Activated CD4-positive, alpha-beta T cell treated with anti-CD3 and anti-CD28 coated beads, Interleukin-2, amount 10 ng/mL, durations not matched to agents 24 days and 14 days (primary cell): ENCODE measurements at regions of chr1 and their contacts with region 1.

Region 1: DNA sequence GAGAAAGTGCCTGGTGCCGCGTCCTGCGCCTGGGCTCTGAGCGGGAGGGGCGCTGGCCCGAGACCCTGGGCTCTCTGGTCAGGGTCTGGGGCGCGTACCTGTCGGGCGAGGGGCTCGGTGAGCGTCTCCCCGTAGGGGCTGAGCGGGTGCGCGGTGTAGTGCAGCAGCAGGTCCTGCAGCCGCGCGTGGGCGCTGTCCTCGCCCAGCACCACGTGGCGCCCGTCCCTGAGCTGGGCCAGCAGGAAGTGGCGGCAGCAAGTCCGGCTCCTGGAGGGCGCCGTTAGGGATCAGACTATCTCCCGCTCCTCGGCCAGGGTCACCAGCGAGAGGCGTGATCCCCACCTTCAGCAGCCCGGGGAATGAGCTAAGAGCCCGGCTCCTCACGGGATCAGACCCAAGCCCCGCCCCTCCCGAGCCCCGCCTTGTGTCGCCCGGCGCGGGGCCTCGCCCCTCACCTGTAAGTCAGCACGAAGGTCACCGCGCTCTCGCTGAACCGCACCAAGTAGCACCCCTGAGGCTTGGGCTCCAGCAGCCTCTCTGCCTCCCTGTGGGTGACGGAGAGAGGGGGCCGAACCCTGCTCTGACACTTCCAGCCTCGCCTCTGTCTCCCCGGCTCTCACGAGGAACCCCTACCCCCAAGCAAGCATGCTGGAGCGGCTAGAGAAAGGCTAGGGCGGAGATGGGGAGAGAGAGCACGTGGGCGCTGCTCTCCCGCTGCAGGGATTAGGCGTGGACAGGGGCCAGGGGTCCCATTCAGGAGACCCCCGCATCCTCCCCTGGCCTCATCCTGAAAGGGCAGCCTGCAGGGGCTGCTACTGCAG is 2.7 kb downstream of the SH2D2A start:
- DNase-seq: peak; percentile 92
- H3K4me3 Mint-ChIP-seq: peak overlapping the region; percentile 96
- H3K27ac Mint-ChIP-seq: peak overlapping the region; percentile 100
- H3K4me1 Mint-ChIP-seq: peaks cover 65% of the 10 kb centered on the region
- H3K27me3 Mint-ChIP-seq: no peaks in the 10 kb centered on the region

Region 2: GRCh38 chr1:156456622-156457465 is 357.1 kb before region 1 on chr1:
- intact Hi-C with region 1: no loop called
- DNase-seq: peak; percentile 98
- H3K4me3 Mint-ChIP-seq: peak overlapping the region; percentile 92
- H3K27ac Mint-ChIP-seq: peak overlapping the region; percentile 98
- H3K4me1 Mint-ChIP-seq: peaks cover 16% of the 10 kb centered on the region
- H3K27me3 Mint-ChIP-seq: peaks cover 14% of the 10 kb centered on the region

Region 3: GRCh38 chr1:156571949-156572662 is 241.9 kb before region 1 on chr1 and contains the start of gene IQGAP3:
- intact Hi-C with region 1: no loop called
- DNase-seq: peak; percentile 94
- H3K4me3 Mint-ChIP-seq: peak within 1 kb of the TSS; percentile 92
- H3K27ac Mint-ChIP-seq: peak within 1 kb of the TSS; percentile 77
- H3K4me1 Mint-ChIP-seq: peaks cover 22% of the 10 kb centered on the region
- H3K27me3 Mint-ChIP-seq: peaks cover 22% of the 10 kb centered on the region
- total RNA-seq, gene IQGAP3: 10.5 and 11.2 TPM in 2 replicates

Region 4: DNA sequence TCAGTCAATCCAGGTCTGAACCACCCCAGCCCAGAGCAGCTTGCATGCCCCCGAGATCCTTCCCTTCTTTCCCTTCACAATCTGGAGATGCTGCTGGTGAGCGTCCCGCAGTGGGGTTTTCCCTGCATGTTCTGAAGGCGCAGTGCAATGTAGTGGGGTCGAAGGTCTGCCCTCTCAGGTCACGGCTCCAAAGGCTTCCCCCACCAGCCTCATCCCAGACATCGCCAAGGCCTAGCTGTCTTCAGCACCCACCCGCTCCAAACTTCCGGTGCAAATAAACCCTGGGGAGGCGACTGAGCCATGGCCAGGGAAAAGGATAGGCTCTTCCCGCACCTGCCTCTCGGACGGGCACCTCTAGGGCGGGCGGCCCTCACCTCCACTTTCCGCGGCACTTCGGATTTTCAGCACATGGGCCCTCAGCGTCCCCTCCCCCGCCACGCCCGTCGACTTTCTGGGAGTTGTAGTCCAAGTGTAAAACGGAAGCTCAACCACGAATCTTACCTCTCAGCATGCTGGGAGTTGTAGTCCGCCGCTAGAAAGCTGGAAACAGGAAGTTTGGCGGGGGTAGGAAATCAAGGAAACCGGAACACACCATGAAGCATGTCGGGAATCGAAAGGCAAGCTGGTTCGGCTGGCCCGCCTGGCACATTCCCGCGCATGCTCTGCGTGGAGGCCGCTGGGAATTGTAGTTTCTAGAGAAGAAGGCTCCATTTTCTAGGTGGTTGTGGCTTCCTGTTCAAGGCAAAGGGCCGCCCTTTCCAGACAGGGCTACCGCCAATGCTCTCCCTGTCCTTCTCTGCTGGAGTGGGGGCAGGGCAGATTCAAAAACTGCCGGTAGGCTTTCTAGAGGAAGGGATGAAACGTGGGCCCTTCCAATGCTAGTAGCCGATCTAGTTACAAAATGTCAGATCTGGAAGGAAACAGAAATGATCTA is 73.0 kb before region 1 on chr1 and contains the start of gene MRPL24:
- intact Hi-C with region 1: loop called (anchors 5 kb)
- DNase-seq: peak; percentile 99
- H3K4me3 Mint-ChIP-seq: peak within 1 kb of the TSS; percentile 98
- H3K27ac Mint-ChIP-seq: peak within 1 kb of the TSS; percentile 96
- H3K4me1 Mint-ChIP-seq: peaks cover 25% of the 10 kb centered on the region
- H3K27me3 Mint-ChIP-seq: no peaks in the 10 kb centered on the region
- total RNA-seq, gene MRPL24: 134 and 135 TPM in 2 replicates

Region 5: GRCh38 chr1:156767101-156767878 is 46.7 kb before region 1 on chr1 and contains the start of gene PRCC:
- intact Hi-C with region 1: loop called (anchors 2 kb)
- DNase-seq: peak; percentile 99
- H3K4me3 Mint-ChIP-seq: no peak within 1 kb of the TSS
- H3K27ac Mint-ChIP-seq: peak within 1 kb of the TSS; percentile 79
- H3K4me1 Mint-ChIP-seq: peaks cover 33% of the 10 kb centered on the region
- H3K27me3 Mint-ChIP-seq: no peaks in the 10 kb centered on the region
- total RNA-seq, gene PRCC: 106 and 120 TPM in 2 replicates

Region 6: GRCh38 chr1:156797212-156797871 is 16.6 kb before region 1 on chr1:
- intact Hi-C with region 1: loop called (anchors 2 kb)
- DNase-seq: peak; percentile 90
- H3K4me3 Mint-ChIP-seq: no peak overlapping the region
- H3K27ac Mint-ChIP-seq: no peak overlapping the region
- H3K4me1 Mint-ChIP-seq: peaks cover 17% of the 10 kb centered on the region
- H3K27me3 Mint-ChIP-seq: no peaks in the 10 kb centered on the region

Region 7: DNA sequence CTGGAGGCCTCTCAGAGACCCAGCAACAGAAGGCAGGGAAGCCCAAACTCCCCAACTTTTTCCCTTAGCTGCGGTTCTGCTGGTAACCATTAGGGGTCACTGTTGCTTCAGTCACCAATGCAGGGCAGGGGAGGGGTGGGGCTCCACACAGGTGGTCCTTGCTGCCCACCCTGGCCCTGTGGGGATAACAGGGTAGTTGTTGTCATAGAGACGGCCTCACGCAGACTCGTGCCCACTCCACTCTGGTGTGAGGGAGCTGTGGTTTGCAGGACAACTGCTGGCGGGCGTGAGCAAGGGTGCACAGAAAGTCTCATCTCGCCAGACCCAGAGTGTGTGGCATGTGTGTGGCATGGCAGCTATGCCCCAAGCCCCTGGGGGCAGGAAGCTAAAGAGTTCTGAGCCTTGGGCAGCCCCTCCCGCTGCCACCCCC is 25.0 kb after region 1 on chr1:
- intact Hi-C with region 1: loop called (anchors 1 kb)
- DNase-seq: peak; percentile 87
- H3K4me3 Mint-ChIP-seq: peak overlapping the region; percentile 58
- H3K27ac Mint-ChIP-seq: peak overlapping the region; percentile 46
- H3K4me1 Mint-ChIP-seq: peaks cover 51% of the 10 kb centered on the region
- H3K27me3 Mint-ChIP-seq: peaks cover 19% of the 10 kb centered on the region

Region 8: DNA sequence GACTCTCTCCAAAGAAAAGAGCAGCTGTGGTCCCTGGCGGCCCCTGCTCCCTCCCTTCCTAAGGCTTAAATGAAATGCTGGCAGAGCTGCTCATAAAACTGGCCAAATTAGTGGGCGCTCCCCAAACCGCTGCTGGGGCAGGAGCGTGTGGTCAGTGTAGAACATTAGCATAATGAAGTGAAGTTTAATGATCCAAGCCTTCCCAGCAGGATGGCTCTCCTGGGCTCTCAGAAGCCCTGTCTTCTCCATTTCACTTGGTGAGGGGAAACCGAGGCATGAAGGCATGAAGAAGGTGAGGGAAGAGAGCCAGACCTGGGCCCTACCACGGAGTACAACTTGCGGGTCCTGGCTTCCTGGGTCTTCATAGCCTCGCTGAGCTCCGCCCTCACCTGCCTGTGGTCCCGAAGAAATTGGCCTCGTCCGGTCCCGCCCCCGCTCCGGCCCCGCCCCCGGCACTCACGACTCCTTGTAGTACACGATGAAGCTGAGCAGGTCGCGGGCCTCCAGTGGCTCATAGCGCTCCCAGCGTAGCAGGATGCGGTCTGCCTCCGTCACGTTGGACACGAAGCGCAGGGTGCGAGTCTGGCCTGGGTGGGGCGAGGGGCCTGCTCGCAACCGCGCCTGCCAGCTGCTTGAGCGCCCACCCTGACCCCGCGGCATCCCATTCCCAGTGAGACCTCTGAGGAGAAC is 34.6 kb after region 1 on chr1:
- intact Hi-C with region 1: loop called (anchors 1 kb)
- DNase-seq: peak; percentile 91
- H3K4me3 Mint-ChIP-seq: peak overlapping the region; percentile 59
- H3K27ac Mint-ChIP-seq: peak overlapping the region; percentile 30
- H3K4me1 Mint-ChIP-seq: peaks cover 30% of the 10 kb centered on the region
- H3K27me3 Mint-ChIP-seq: peaks cover 35% of the 10 kb centered on the region

Region 9: DNA sequence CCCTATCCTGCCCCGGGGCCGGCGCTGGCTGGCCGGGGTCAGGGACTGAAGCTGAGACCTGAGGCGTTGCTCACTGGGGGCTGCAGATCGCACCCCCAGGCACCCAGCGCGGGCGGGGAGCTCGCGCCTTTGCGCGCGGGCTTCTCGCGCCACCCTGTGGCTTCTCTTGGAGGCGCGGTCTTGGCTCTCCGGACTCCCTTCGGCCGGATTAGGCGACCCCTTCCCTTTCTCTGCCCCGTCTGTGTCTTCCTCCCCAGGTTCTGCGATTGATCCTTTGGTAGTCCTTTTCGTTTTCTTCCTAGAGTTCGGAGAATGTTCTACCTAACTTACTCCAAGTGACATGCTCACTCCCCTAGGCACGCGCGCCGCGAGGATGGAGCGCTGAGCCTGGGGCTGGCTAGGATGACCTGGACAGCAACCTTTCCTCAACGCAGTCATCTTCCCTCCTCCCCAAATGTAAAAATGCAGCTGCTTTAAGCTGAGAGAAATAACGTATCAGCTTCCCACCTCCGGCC is 46.2 kb after region 1 on chr1:
- intact Hi-C with region 1: loop called (anchors 1 kb)
- DNase-seq: peak; percentile 91
- H3K4me3 Mint-ChIP-seq: peak overlapping the region; percentile 80
- H3K27ac Mint-ChIP-seq: peak overlapping the region; percentile 18
- H3K4me1 Mint-ChIP-seq: peaks cover 51% of the 10 kb centered on the region
- H3K27me3 Mint-ChIP-seq: peaks cover 25% of the 10 kb centered on the region

Region 10: DNA sequence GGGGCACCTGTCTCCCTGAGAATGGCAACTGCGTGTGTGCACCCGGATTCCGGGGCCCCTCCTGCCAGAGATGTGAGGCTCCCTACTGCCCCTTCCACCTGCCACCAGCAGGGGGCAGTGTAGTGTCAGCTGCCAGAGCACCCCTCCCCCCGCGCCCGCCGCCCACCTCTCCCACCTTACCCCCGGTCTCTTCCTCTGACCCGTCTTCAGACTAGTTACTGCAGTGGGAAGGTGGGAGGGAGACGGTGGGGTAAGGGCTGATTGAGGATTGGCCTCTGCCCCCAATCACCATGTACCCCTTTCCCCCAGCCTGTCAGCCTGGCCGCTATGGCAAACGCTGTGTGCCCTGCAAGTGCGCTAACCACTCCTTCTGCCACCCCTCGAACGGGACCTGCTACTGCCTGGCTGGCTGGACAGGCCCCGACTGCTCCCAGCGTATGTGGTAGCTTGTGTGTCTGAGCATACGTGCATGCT is 96.4 kb after region 1 on chr1:
- intact Hi-C with region 1: no loop called
- DNase-seq: peak; percentile 88
- H3K4me3 Mint-ChIP-seq: no peak overlapping the region
- H3K27ac Mint-ChIP-seq: no peak overlapping the region
- H3K4me1 Mint-ChIP-seq: peaks cover 11% of the 10 kb centered on the region
- H3K27me3 Mint-ChIP-seq: peaks cover 15% of the 10 kb centered on the region